ENCODE measurements at regions of chr20 and their contacts with region 1.

Region 1: GRCh38 chr20:2795451-2795850 is 5.0 kb downstream of the CPXM1 start:
- DNase-seq: no peak
- H3K4me3 ChIP-seq: no peak overlapping the region
- H3K27ac ChIP-seq: no peak overlapping the region
- H3K4me1 ChIP-seq: peaks cover 0 to 13% (median 6%) of the 10 kb centered on the region in 4 experiments; a peak in 6 of 7 replicates
- H3K27me3 ChIP-seq: peaks cover 0 to 2% (median 0%) of the 10 kb centered on the region in 4 experiments; a peak in 2 of 7 replicates
- CTCF ChIP-seq: no peak
- EP300 ChIP-seq: no peak
- POLR2A ChIP-seq: no peak
- RAD21 ChIP-seq: no peak

Region 2: GRCh38 chr20:2663887-2664719 is 131.3 kb before region 1 on chr20 and contains the start of gene IDH3B:
- CTCF ChIA-PET with region 1: no interaction called
- POLR2A ChIA-PET with region 1: no interaction called
- DNase-seq: peak; percentile 64 to 94
- H3K4me3 ChIP-seq: peak within 1 kb of the TSS; percentile 93 to 96 (median 96)
- H3K27ac ChIP-seq: peak within 1 kb of the TSS; percentile 78
- H3K4me1 ChIP-seq: peaks cover 0 to 4% (median under 1%) of the 10 kb centered on the region in 4 experiments; a peak in 3 of 7 replicates
- H3K27me3 ChIP-seq: no peaks in the 10 kb centered on the region; a peak in 3 of 7 replicates
- CTCF ChIP-seq: no peak
- EP300 ChIP-seq: no peak
- POLR2A ChIP-seq: peak; percentile 88 to 97
- RAD21 ChIP-seq: no peak
- total RNA-seq, gene IDH3B: 103 and 110 TPM in 2 replicates

Region 3: DNA sequence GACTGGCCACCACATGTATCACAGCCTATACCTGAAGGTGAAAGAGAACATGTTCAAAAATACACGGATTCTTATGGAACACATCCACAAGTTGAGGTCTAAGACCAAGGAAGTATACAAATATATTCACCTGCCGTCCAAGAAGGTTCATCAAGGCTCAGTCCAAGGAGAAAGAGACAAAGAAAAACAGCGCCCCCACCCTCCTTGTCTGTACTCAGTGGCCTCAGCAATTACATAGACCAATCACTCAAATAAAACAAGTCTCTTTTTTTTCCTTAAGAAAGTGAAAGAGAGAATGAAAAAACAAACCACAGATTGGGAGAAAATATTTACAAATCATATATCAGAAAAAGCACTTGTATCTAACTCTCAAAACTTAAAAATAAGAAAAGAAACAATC is 14.5 kb before region 1 on chr20:
- CTCF ChIA-PET with region 1: interaction called, 18 read pairs
- POLR2A ChIA-PET with region 1: interaction called, 4 read pairs
- DNase-seq: no peak
- H3K4me3 ChIP-seq: no peak overlapping the region
- H3K27ac ChIP-seq: no peak overlapping the region
- H3K4me1 ChIP-seq: no peaks in the 10 kb centered on the region
- H3K27me3 ChIP-seq: no peaks in the 10 kb centered on the region
- CTCF ChIP-seq: no peak
- EP300 ChIP-seq: no peak
- POLR2A ChIP-seq: no peak
- RAD21 ChIP-seq: no peak

Measured in H1 (cell line).